ENCODE measurements at regions of chr3 and their contacts with region 1.

Region 1: GRCh38 chr3:193168911-193169310 is 72.1 kb upstream of the PLAAT1 start:
- DNase-seq: no peak
- H3K4me3 ChIP-seq: no peak overlapping the region
- H3K27ac ChIP-seq: no peak overlapping the region
- H3K4me1 ChIP-seq: no peaks in the 10 kb centered on the region
- H3K27me3 ChIP-seq: no peaks in the 10 kb centered on the region
- CTCF ChIP-seq: no peak

Region 2: DNA sequence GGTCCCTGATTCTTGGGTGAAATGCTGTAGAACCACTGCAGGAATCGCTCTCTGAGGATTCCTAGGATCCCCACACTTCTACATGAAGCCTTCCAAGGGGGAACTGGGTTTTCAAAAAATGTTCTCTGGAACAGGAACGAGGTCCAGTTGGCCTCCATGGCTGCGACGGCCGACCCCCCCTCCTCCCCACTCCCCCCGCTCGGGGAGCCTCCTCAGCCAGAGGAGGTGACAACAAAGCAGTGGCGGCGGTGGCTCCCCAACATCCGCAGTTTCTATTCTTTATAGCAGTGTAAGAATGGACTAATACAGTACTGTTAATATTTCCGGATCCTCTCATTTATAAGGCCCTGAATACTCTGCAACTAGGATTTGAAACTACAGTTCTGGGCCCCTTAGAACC is 11.9 kb before region 1 on chr3:
- CTCF ChIA-PET with region 1: no interaction called
- dilution Hi-C with region 1: no loop called
- in situ Hi-C with region 1: no loop called
- intact Hi-C with region 1: loop called (anchors 1 kb)
- DNase-seq: no peak
- H3K4me3 ChIP-seq: no peak overlapping the region
- H3K27ac ChIP-seq: no peak overlapping the region
- H3K4me1 ChIP-seq: no peaks in the 10 kb centered on the region
- H3K27me3 ChIP-seq: no peaks in the 10 kb centered on the region
- CTCF ChIP-seq: no peak

Measured in mammary epithelial cell (primary cell).